ENCODE measurements at regions of chr10 and their contacts with region 1.

Region 1: DNA sequence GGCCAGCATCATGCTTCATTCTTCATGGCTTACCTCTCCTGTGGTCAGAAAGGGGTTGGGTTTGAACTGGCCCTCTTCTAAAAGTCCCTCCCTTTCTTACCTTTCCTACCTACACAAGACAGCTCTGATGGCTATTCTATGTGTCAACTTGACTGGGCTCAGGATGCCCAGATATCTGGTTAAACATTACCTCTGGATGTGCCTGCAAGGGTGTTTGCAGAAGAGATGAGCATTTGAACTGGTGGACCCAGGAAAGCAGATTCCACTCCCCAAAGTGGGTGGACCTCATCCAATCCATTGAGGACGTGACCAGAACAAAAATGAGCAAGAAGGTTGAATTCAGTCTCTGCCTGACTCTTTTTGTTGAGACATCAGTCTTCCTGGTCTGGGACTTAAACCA is 79.0 kb upstream of the TCF7L2 start:
- DNase-seq: no peak
- H3K4me3 ChIP-seq: no peak overlapping the region
- H3K27ac ChIP-seq: no peak overlapping the region
- H3K4me1 ChIP-seq: no peaks in the 10 kb centered on the region
- H3K27me3 ChIP-seq: no peaks in the 10 kb centered on the region
- CTCF ChIP-seq: no peak
- POLR2A ChIP-seq: no peak

Region 2: GRCh38 chr10:112898540-112899395 is 27.7 kb after region 1 on chr10:
- intact Hi-C with region 1: loop called (anchors 1 kb)
- DNase-seq: no peak
- H3K4me3 ChIP-seq: peak overlapping the region in 1 of 3 donors; percentile 1
- H3K27ac ChIP-seq: no peak overlapping the region
- H3K4me1 ChIP-seq: no peaks in the 10 kb centered on the region
- H3K27me3 ChIP-seq: no peaks in the 10 kb centered on the region
- CTCF ChIP-seq: no peak
- POLR2A ChIP-seq: no peak

Region 3: DNA sequence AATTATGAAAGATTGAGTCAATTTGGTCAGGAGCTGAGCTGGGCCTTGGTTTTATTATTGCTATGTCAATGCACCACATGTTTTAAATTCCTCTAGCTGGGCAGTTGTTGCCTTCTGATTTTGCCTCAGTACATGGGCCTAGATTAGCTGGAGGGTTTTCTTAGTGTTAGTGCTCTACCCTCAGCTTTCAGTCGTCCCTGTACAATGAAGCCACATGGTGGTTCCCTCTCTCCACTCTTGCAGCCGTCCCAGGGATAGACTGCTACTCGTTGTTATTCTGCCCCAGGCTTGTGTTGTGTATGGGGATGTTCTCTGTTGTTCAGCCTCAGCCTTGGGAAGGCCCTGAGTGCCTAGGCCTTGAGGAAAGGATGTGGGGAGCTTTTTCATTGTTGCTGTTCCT is 1020.5 kb after region 1 on chr10:
- intact Hi-C with region 1: no loop called
- DNase-seq: no peak
- H3K4me3 ChIP-seq: no peak overlapping the region
- H3K27ac ChIP-seq: no peak overlapping the region
- H3K4me1 ChIP-seq: no peaks in the 10 kb centered on the region
- H3K27me3 ChIP-seq: no peaks in the 10 kb centered on the region
- CTCF ChIP-seq: no peak
- POLR2A ChIP-seq: no peak

Measured in breast epithelium (tissue), 4 donors.